AG04450 (cell line): ENCODE measurements at regions of chr3 and their contacts with region 1.

Region 1: GRCh38 chr3:42247576-42248027 is 18.4 kb downstream of the CCK start:
- DNase-seq: no peak
- H3K4me3 ChIP-seq: peak overlapping the region; percentile 18
- H3K27ac ChIP-seq: no peak overlapping the region
- H3K27me3 ChIP-seq: peaks cover 24% of the 10 kb centered on the region
- CTCF ChIP-seq: peak; percentile 70

Region 2: DNA sequence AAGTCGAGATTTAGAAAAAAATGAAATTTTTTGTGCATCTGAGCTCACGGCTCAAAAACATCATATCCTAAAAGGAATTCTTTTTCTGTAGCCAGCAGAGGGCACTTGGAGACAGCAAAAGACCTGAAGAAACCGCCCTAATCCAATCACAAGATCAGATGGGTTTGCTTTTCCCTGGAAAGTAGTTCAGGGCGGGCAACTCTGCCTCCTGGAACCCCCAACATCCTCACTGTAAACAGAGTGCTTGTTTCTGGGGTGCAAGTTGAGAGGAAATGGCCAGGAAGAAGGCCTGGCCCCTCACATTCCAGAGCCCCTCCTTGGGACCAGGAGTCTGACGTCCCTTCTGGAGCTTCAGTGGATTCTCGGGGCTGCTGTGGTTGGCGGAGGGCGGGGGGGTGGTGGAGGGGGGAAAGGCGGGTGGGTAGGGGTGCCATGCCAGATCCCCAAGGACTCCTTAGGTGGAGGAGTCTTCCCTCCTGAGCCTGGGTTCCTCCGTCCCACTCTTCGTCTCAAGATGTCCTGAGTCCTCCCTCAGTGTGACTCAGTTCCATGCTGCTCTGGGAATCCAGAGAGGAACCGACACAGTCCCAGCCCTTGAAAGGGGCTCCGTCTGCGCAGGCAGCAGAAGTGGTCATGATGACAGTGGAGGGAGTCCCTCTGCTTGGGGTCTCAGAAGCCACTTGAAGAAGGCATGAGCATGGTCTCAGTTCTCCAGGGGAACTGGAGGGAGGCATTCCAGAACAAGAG is 17.5 kb before region 1 on chr3:
- CTCF ChIA-PET with region 1: interaction called, 14 read pairs
- POLR2A ChIA-PET with region 1: no interaction called
- DNase-seq: peak; percentile 33
- H3K4me3 ChIP-seq: no peak overlapping the region; the same call in 1 of the 2 replicates
- H3K27ac ChIP-seq: no peak overlapping the region
- H3K27me3 ChIP-seq: peaks cover 3% of the 10 kb centered on the region
- CTCF ChIP-seq: peak; percentile 73

Region 3: GRCh38 chr3:42263354-42264346 is 16.0 kb after region 1 on chr3:
- CTCF ChIA-PET with region 1: interaction called, 27 read pairs
- POLR2A ChIA-PET with region 1: no interaction called
- DNase-seq: no peak
- H3K4me3 ChIP-seq: peak overlapping the region; percentile 17; the same call in 1 of the 2 replicates
- H3K27ac ChIP-seq: no peak overlapping the region
- H3K27me3 ChIP-seq: peaks cover 59% of the 10 kb centered on the region
- CTCF ChIP-seq: no peak

Region 4: DNA sequence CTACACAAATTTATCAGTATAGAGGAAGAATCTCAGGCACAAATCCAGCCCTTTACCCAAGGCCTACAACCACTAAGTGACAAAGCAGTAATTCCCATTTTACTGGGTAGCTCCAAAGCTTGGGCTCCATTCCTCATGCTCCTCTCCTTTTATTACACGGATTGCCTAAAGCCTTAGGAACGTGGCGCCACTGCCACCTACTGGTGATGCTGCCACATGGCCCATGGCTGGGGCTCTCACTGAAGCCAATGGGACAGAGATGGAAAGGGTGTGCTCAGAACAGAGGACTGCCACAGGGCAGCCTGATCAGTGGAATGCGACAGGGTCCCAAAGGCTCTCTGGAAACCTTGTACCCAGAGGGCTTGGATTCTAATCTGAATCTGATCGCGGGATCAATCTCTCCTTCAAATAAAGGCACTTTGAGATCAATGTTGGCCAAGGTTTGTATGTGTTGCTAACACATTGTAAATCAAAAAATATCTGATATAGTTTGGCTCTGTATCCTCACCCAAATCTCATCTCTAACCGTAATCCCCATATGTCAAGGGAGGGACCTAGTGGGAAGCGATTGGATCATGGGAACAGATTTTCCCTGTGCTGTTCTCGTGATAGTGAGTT is 196.3 kb after region 1 on chr3:
- CTCF ChIA-PET with region 1: interaction called, 73 read pairs
- POLR2A ChIA-PET with region 1: no interaction called
- DNase-seq: peak; percentile 38
- H3K4me3 ChIP-seq: no peak overlapping the region
- H3K27ac ChIP-seq: no peak overlapping the region
- H3K27me3 ChIP-seq: peaks cover 18% of the 10 kb centered on the region
- CTCF ChIP-seq: peak; percentile 100

Region 5: DNA sequence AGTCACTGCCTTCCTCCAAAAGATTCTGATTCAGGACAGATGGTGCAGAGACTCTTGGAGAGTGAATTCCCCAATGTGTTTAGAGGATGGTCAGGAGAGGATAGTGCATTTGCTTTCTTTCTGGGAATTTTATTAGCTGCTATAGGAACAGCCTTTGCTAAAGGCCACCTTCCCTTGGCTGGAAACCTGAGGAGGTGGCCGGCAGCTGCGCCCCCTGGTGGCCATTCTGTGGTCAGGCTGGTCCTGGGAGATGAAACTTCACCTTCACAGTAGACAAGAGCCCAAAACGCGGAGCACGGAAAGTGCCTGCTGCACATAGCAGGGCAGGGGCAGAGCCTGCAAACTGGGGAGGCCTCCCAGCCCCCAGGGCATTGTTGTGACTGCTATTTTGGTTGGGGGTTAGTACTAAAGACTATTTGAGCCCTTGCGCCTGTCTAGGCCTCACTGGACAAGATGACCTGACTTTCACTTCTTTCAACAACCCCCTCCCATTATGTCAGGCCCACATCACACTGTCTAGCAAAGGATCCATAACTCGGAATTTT is 299.9 kb after region 1 on chr3:
- CTCF ChIA-PET with region 1: interaction called, 28 read pairs
- POLR2A ChIA-PET with region 1: no interaction called
- DNase-seq: peak; percentile 13
- H3K4me3 ChIP-seq: no peak overlapping the region
- H3K27ac ChIP-seq: no peak overlapping the region
- H3K27me3 ChIP-seq: peaks cover 4% of the 10 kb centered on the region
- CTCF ChIP-seq: peak; percentile 94